ENCODE measurements at regions of chr15 and their contacts with region 1.

Region 1: GRCh38 chr15:89358755-89359439 is 24.3 kb upstream of the POLG start:
- DNase-seq: peak; percentile 74 to 84 (median 81)
- H3K4me3 ChIP-seq: peak overlapping the region; percentile 18 to 62 (median 27)
- H3K4me3 Mint-ChIP-seq: peak overlapping the region; percentile 80 to 89
- H3K27ac ChIP-seq: no peak overlapping the region
- H3K27ac Mint-ChIP-seq: peak overlapping the region in 1 of 7 donors; percentile 11
- H3K4me1 ChIP-seq: peaks cover 22 to 33% of the 10 kb centered on the region in 2 donors
- H3K4me1 Mint-ChIP-seq: peaks cover 32% of the 10 kb centered on the region
- H3K27me3 ChIP-seq: peaks cover 53 to 88% of the 10 kb centered on the region in 2 donors
- H3K27me3 Mint-ChIP-seq: peaks cover 81 to 93% (median 86%) of the 10 kb centered on the region in 3 donors
- CTCF ChIP-seq: peak; percentile 99

Region 2: DNA sequence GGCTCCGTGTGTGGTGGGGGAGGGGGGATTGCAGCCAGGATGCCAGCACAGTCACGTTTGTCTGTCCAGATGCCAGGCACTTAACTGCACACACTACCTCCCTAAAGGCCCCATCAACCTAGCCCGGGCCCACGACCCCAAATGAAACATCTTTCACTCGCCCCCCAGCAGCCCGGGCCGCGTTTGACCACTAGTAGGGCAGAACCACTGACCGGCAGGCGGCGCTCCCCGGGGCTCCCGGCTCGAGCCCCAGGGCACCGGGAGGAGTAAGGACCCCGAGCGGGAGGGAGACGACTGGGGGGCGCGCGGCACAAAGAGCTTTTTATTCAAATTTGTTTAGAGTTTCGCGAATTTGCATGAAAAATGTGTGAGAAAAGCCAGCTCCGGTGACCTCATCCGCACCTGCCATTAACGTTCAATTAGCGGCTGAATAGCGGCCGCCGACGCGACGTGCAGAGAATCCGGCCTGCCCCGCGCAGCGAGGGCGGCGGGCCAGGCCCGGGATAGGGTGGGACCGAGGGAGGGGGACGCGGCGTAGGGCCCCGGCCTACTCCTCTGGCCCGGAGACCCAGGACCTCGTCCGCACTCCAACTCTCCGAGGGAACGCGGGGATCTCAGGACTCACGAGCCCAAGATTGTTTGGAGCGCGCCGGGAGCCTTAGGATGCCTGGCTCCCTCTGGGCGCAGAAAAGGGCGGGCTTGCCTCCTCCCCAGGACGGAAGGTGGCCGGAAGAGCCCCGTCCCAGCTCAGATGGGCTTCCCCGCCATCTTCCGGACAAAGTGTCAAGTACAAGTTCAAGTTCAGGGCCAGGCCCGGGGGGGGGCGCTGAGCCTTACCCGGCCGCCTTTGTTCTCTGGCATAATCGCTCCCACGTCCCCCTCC is 40.6 kb after region 1 on chr15:
- intact Hi-C with region 1: loop called in 1 of 2 experiments (anchors 5 kb)
- DNase-seq: peak in 2 of 3 donors; percentile 39 to 54
- H3K4me3 ChIP-seq: peak overlapping the region; percentile 6 to 72 (median 24)
- H3K4me3 Mint-ChIP-seq: peak overlapping the region; percentile 79 to 89
- H3K27ac ChIP-seq: no peak overlapping the region
- H3K27ac Mint-ChIP-seq: no peak overlapping the region
- H3K4me1 ChIP-seq: peaks cover 67 to 75% of the 10 kb centered on the region in 2 donors
- H3K4me1 Mint-ChIP-seq: peaks cover 66% of the 10 kb centered on the region
- H3K27me3 ChIP-seq: peaks cover 31 to 55% of the 10 kb centered on the region in 2 donors
- H3K27me3 Mint-ChIP-seq: peaks cover 43 to 78% (median 73%) of the 10 kb centered on the region in 3 donors
- CTCF ChIP-seq: peak; percentile 69

Region 3: GRCh38 chr15:89406940-89407607 is 48.2 kb after region 1 on chr15:
- intact Hi-C with region 1: loop called in 1 of 2 experiments (anchors 5 kb)
- DNase-seq: peak in 2 of 3 donors; percentile 52 to 55
- H3K4me3 ChIP-seq: peak overlapping the region in 1 of 3 experiments; percentile 54
- H3K4me3 Mint-ChIP-seq: peak overlapping the region; percentile 72 to 97
- H3K27ac ChIP-seq: no peak overlapping the region
- H3K27ac Mint-ChIP-seq: no peak overlapping the region
- H3K4me1 ChIP-seq: peaks cover 50 to 70% of the 10 kb centered on the region in 2 donors
- H3K4me1 Mint-ChIP-seq: peaks cover 65% of the 10 kb centered on the region
- H3K27me3 ChIP-seq: peaks cover 90 to 98% of the 10 kb centered on the region in 2 donors
- H3K27me3 Mint-ChIP-seq: peaks cover 90 to 99% (median 98%) of the 10 kb centered on the region in 3 donors
- CTCF ChIP-seq: peak; percentile 23

Region 4: GRCh38 chr15:89416141-89416853 is 57.4 kb after region 1 on chr15:
- intact Hi-C with region 1: loop called in 1 of 2 experiments (anchors 5 kb)
- DNase-seq: peak; percentile 74 to 86 (median 80)
- H3K4me3 ChIP-seq: no peak overlapping the region
- H3K4me3 Mint-ChIP-seq: peak overlapping the region in 1 of 2 donors; percentile 85
- H3K27ac ChIP-seq: no peak overlapping the region
- H3K27ac Mint-ChIP-seq: no peak overlapping the region
- H3K4me1 ChIP-seq: peaks cover 5 to 6% of the 10 kb centered on the region in 2 donors
- H3K4me1 Mint-ChIP-seq: peaks cover 10% of the 10 kb centered on the region
- H3K27me3 ChIP-seq: peaks cover 75 to 99% of the 10 kb centered on the region in 2 donors
- H3K27me3 Mint-ChIP-seq: peaks cover 86 to 98% (median 96%) of the 10 kb centered on the region in 3 donors
- CTCF ChIP-seq: peak; percentile 99

Region 5: GRCh38 chr15:89430530-89431341 is 71.8 kb after region 1 on chr15:
- intact Hi-C with region 1: loop called (anchors 1 kb)
- DNase-seq: peak; percentile 63 to 74 (median 71)
- H3K4me3 ChIP-seq: peak overlapping the region; percentile 17 to 67 (median 21)
- H3K4me3 Mint-ChIP-seq: peak overlapping the region; percentile 77 to 95
- H3K27ac ChIP-seq: no peak overlapping the region
- H3K27ac Mint-ChIP-seq: peak overlapping the region in 2 of 7 donors; percentile 21 to 90
- H3K4me1 ChIP-seq: peaks cover 19 to 27% of the 10 kb centered on the region in 2 donors
- H3K4me1 Mint-ChIP-seq: peaks cover 25% of the 10 kb centered on the region
- H3K27me3 ChIP-seq: peaks cover 6 to 41% of the 10 kb centered on the region in 2 donors
- H3K27me3 Mint-ChIP-seq: peaks cover 28 to 52% (median 42%) of the 10 kb centered on the region in 3 donors
- CTCF ChIP-seq: peak; percentile 98

Region 6: DNA sequence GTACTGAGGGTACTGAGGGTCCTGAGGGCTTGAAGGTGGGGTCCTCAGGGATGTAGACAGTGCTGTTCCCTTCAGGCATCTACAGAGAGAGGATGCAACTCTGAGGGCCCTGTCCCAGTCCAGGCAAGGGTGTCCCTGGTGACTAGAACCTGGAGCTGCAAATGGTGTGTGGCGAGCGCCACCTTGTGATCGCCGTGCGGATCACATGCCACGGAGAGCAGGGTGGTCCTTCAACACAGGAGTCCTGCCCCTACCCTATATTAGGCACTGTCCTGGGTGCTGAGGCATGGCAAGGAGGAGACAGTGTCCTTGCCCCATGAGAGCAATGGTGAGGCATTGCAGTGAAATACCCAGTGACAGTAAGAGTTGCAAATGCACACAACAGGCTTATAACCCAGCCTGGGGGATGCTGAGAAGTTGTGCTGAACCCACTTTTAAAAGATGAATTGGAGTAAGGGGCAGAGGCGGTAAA is 113.9 kb after region 1 on chr15:
- intact Hi-C with region 1: loop called in 1 of 2 experiments (anchors 2 kb)
- DNase-seq: peak in 2 of 3 donors; percentile 22 to 44
- H3K4me3 ChIP-seq: no peak overlapping the region
- H3K4me3 Mint-ChIP-seq: no peak overlapping the region
- H3K27ac ChIP-seq: no peak overlapping the region
- H3K27ac Mint-ChIP-seq: no peak overlapping the region
- H3K4me1 ChIP-seq: no peaks in the 10 kb centered on the region
- H3K4me1 Mint-ChIP-seq: no peaks in the 10 kb centered on the region
- H3K27me3 ChIP-seq: peaks cover 0 to 23% of the 10 kb centered on the region in 2 donors
- H3K27me3 Mint-ChIP-seq: peaks cover 16 to 47% (median 40%) of the 10 kb centered on the region in 3 donors
- CTCF ChIP-seq: peak; percentile 78

Region 7: GRCh38 chr15:89556413-89557262 is 197.7 kb after region 1 on chr15:
- intact Hi-C with region 1: loop called in 1 of 2 experiments (anchors 10 kb)
- DNase-seq: peak; percentile 36 to 63 (median 54)
- H3K4me3 ChIP-seq: no peak overlapping the region
- H3K4me3 Mint-ChIP-seq: no peak overlapping the region
- H3K27ac ChIP-seq: no peak overlapping the region
- H3K27ac Mint-ChIP-seq: no peak overlapping the region
- H3K4me1 ChIP-seq: peaks cover 0 to 3% of the 10 kb centered on the region in 2 donors
- H3K4me1 Mint-ChIP-seq: peaks cover 3% of the 10 kb centered on the region
- H3K27me3 ChIP-seq: no peaks in the 10 kb centered on the region
- H3K27me3 Mint-ChIP-seq: peaks cover 3 to 18% (median 3%) of the 10 kb centered on the region in 3 donors
- CTCF ChIP-seq: peak; percentile 80

Measured in CD14-positive monocyte (primary cell).